HCT116 (cell line): ENCODE measurements at regions of chr4 and their contacts with region 1.

Region 1: DNA sequence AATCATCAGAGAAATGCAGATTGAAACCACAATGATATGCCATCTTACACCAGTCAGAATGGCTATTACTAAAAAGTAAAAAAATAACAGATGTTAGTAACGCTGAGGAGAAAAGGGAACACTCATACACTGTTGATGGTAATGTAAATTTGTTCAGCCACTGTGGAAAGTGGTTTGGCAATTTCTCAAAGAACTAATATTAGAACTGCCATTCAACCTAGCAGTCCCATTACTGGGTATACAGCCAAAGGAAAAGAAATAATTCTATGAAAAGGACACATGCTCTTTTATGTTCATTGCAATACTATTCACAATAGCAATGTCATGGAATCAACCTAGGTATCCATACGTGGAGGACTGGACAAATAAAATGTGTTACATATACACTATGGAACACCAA is 566.3 kb downstream of the STPG2 start:
- DNase-seq: no peak
- ATAC-seq: no peak
- H3K4me3 ChIP-seq: no peak overlapping the region
- H3K27ac ChIP-seq: no peak overlapping the region
- H3K4me1 ChIP-seq: no peaks in the 10 kb centered on the region
- H3K27me3 ChIP-seq: no peaks in the 10 kb centered on the region
- CTCF ChIP-seq: no peak
- POLR2A ChIP-seq: no peak
- RAD21 ChIP-seq: no peak

Region 2: DNA sequence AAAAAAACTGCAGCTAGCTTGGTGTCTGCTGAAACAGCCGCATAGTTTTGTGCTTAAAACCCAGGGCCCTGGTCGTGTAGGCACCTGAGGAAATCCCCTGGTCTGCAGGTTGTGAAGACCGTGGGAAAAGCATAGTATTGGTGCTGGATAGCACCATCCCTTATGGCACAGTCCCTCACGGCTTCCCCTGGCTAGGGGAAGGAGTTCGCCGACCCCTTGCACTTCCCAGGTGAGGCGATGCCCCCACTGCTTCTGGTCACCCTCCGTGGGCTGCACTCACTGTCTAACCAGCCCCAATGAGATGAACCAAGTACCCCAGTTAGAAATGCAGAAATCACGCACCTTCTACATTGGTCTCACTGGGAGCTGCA is 538.9 kb before region 1 on chr4:
- CTCF ChIA-PET with region 1: no interaction called
- POLR2A ChIA-PET with region 1: no interaction called
- RAD21 ChIA-PET with region 1: no interaction called
- intact Hi-C with region 1: no loop called
- DNase-seq: no peak
- ATAC-seq: no peak
- H3K4me3 ChIP-seq: no peak overlapping the region
- H3K27ac ChIP-seq: no peak overlapping the region
- H3K4me1 ChIP-seq: no peaks in the 10 kb centered on the region
- H3K27me3 ChIP-seq: no peaks in the 10 kb centered on the region
- CTCF ChIP-seq: no peak
- POLR2A ChIP-seq: no peak
- RAD21 ChIP-seq: no peak

Region 3: DNA sequence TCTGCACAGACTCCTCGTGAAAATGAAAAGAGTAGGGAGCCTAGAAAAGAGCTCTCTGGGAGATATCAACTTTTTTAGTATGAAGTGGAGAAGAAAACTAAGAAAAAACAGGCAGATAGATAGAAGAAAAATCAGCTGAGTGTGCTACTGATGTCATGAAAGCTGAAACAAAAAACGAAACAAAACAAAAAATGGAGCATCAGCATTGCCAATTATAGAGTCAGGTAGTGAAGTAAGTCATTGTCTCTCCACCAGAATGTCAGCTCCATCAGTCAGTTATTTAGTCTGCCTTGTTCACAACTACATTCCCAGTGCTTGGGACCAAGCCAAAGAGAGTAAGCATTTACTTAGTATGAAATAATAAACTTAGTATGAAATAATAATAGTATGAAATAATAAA is 28.8 kb before region 1 on chr4:
- CTCF ChIA-PET with region 1: no interaction called
- POLR2A ChIA-PET with region 1: no interaction called
- RAD21 ChIA-PET with region 1: no interaction called
- intact Hi-C with region 1: loop called (anchors 1 kb)
- DNase-seq: no peak
- ATAC-seq: no peak
- H3K4me3 ChIP-seq: no peak overlapping the region
- H3K27ac ChIP-seq: no peak overlapping the region
- H3K4me1 ChIP-seq: no peaks in the 10 kb centered on the region
- H3K27me3 ChIP-seq: no peaks in the 10 kb centered on the region
- CTCF ChIP-seq: no peak
- POLR2A ChIP-seq: no peak
- RAD21 ChIP-seq: no peak